HCT116 (cell line): ENCODE measurements at regions of chr20 and their contacts with region 1.

Region 1: DNA sequence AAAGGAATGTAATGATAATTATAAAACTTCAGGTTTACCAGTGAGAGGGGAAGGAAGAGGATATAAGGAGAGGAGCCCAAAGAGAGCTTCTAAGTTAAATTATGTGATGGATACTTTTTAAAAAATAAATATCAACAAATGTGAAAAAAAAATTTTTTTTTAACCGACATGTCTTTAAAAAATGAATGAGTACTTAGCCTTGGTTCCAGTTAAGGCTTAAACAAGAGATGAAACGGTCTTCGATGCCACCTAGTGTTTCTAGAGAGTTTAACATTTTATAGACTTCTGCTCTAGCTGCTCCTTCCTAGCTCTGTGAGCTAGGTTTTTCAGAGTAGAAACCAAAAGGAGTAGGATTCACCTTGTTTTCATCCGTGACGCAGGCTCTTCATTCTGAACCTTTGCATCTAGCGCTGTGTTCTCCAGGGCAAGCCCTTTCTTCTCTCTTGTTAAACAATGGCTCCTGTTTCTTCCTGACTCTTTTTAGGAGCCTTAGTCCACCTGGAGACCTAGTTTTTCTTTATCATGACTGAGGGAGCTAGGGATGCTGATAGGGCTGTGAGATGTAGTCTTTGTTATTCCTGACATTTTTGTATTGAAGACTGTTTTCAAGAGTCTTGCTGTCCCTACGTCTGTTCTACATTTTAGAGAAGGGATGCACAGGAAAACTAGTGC is 42.4 kb upstream of the GNRH2 start:
- DNase-seq: peak; percentile 46
- ATAC-seq: peak; percentile 83
- H3K4me3 ChIP-seq: no peak overlapping the region
- H3K27ac ChIP-seq: no peak overlapping the region
- H3K4me1 ChIP-seq: no peaks in the 10 kb centered on the region
- H3K27me3 ChIP-seq: no peaks in the 10 kb centered on the region
- CTCF ChIP-seq: peak; percentile 44 to 62 (median 59)
- POLR2A ChIP-seq: no peak
- RAD21 ChIP-seq: peak; percentile 70

Region 2: GRCh38 chr20:2752567-2753460 is 248.2 kb before region 1 on chr20:
- CTCF ChIA-PET with region 1: interaction called, 17 read pairs
- POLR2A ChIA-PET with region 1: no interaction called
- RAD21 ChIA-PET with region 1: interaction called, 3 read pairs
- intact Hi-C with region 1: loop called (anchors 1 kb)
- DNase-seq: peak; percentile 31
- ATAC-seq: peak; percentile 78
- H3K4me3 ChIP-seq: peak overlapping the region; percentile 61 to 73
- H3K27ac ChIP-seq: peak overlapping the region; percentile 53; the same call in 1 of the 2 replicates
- H3K4me1 ChIP-seq: peaks cover 0 to 22% of the 10 kb centered on the region in 2 experiments; a peak in 2 of 4 replicates
- H3K27me3 ChIP-seq: no peaks in the 10 kb centered on the region
- CTCF ChIP-seq: peak; percentile 77 to 95 (median 92)
- POLR2A ChIP-seq: no peak
- RAD21 ChIP-seq: peak; percentile 52

Region 3: GRCh38 chr20:2914160-2914559 is 86.8 kb before region 1 on chr20:
- CTCF ChIA-PET with region 1: interaction called, 4 read pairs
- POLR2A ChIA-PET with region 1: no interaction called
- RAD21 ChIA-PET with region 1: no interaction called
- intact Hi-C with region 1: loop called (anchors 1 kb)
- DNase-seq: no peak
- ATAC-seq: peak; percentile 65
- H3K4me3 ChIP-seq: no peak overlapping the region
- H3K27ac ChIP-seq: no peak overlapping the region
- H3K4me1 ChIP-seq: 0 out of 4 replicates have a peak, but pooled peaks cover 0 to under 1% of the 10 kb centered on the region in 2 experiments
- H3K27me3 ChIP-seq: no peaks in the 10 kb centered on the region
- CTCF ChIP-seq: peak in 2 of 3 experiments; percentile 16 to 32; a peak in 2 of 6 replicates
- POLR2A ChIP-seq: no peak
- RAD21 ChIP-seq: peak; percentile 49

Region 4: DNA sequence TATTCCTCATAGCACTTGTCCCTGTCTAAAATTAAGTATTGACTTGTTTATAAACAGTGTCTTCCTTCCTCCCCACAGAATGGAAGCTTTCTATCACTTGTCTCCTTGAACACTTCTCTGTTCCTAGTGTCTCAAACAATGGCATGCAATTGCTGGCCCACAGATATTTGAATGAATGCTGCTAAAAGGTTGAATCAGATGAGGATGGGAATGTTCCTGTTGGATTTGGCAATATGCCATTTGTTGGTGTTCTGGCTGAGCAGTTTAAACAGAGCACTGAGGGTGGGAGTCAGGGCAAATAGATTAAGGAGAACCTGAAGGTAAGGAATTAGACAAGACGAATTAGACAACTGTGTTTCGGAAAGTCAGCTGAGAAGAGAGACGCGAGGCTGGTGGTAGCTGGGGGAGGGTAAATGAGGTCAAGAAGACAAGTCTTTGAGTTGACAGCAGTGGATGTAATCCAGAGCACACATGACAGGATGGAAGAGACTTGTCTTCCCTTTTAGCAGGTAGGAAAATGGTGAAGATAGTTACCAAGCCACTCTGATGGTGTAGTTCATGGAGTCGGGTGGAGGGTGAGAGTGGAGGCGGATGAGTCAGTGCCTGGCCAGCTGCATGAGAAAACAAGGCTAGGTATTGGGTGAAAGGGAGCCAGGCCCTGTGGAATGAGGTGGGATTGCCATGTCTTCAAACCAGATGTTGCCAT is 15.9 kb before region 1 on chr20:
- CTCF ChIA-PET with region 1: no interaction called
- POLR2A ChIA-PET with region 1: no interaction called
- RAD21 ChIA-PET with region 1: no interaction called
- intact Hi-C with region 1: no loop called
- DNase-seq: no peak
- ATAC-seq: peak; percentile 67; the same call in 1 of the 2 replicates
- H3K4me3 ChIP-seq: no peak overlapping the region
- H3K27ac ChIP-seq: no peak overlapping the region
- H3K4me1 ChIP-seq: peaks cover 8 to 18% of the 10 kb centered on the region in 2 experiments; a peak in 3 of 4 replicates
- H3K27me3 ChIP-seq: no peaks in the 10 kb centered on the region
- CTCF ChIP-seq: no peak
- POLR2A ChIP-seq: no peak
- RAD21 ChIP-seq: no peak